ENCODE measurements at regions of chr4 and their contacts with region 1.

Region 1: DNA sequence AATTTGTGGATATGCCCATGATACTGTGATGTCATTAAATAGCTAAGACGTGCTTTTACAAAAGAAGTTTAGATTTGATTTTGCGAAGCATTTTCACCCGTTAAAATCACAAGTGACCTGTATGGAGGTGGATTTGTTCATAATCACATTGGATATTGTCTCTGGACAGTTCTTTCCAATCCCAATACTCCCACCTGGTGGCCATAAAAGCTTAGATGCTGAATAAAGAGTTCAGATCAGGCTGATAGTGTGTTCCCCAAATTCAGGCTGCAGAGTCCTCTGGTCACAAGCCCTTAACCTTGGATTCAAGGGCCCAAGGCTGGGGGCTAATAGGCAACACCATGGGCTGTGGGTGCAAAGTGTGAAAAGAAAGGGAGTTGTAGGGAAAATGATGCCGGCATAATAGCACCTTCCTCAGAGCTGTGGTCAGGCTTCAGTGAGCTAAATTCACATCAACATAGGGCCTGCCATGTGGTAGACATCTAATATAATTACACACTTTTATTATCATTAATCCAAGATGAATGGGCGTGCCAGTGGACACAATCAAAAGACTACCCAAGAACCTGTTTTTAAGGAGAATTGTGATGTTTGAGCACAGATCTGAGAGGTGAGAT is 28.1 kb downstream of the SMIM43 start:
- DNase-seq: no peak
- ATAC-seq: peak in 1 of 2 donors; percentile 58
- H3K4me3 ChIP-seq: no peak overlapping the region
- H3K27ac ChIP-seq: no peak overlapping the region
- H3K4me1 ChIP-seq: no peaks in the 10 kb centered on the region
- H3K27me3 ChIP-seq: no peaks in the 10 kb centered on the region
- CTCF ChIP-seq: peak in 4 of 5 experiments; percentile 28 to 46 (median 39)
- POLR2A ChIP-seq: no peak

Region 2: GRCh38 chr4:121370729-121371325 is 366.0 kb before region 1 on chr4:
- in situ Hi-C with region 1: loop called (anchors 5 to 25 kb)
- intact Hi-C with region 1: loop called (anchors 10 kb)
- DNase-seq: no peak
- ATAC-seq: no peak
- H3K4me3 ChIP-seq: no peak overlapping the region
- H3K27ac ChIP-seq: no peak overlapping the region
- H3K4me1 ChIP-seq: no peaks in the 10 kb centered on the region
- H3K27me3 ChIP-seq: no peaks in the 10 kb centered on the region
- CTCF ChIP-seq: peak in 3 of 5 experiments; percentile 15 to 56 (median 40)
- POLR2A ChIP-seq: no peak

Region 3: GRCh38 chr4:121462660-121463261 is 274.1 kb before region 1 on chr4:
- in situ Hi-C with region 1: no loop called
- intact Hi-C with region 1: loop called (anchors 10 kb)
- DNase-seq: no peak
- ATAC-seq: peak in 1 of 2 donors; percentile 39
- H3K4me3 ChIP-seq: no peak overlapping the region
- H3K27ac ChIP-seq: no peak overlapping the region
- H3K4me1 ChIP-seq: no peaks in the 10 kb centered on the region
- H3K27me3 ChIP-seq: no peaks in the 10 kb centered on the region
- CTCF ChIP-seq: peak in 2 of 5 experiments; percentile 39
- POLR2A ChIP-seq: no peak

Region 4: GRCh38 chr4:121869841-121870656 is 133.2 kb after region 1 on chr4 and contains the start of gene BBS7:
- in situ Hi-C with region 1: no loop called
- intact Hi-C with region 1: no loop called
- DNase-seq: peak; percentile 91 to 93
- ATAC-seq: peak; percentile 98
- H3K4me3 ChIP-seq: peak within 1 kb of the TSS; percentile 78 to 98 (median 96)
- H3K27ac ChIP-seq: peak within 1 kb of the TSS; percentile 83 to 90 (median 90)
- H3K4me1 ChIP-seq: peaks cover 0 to 4% of the 10 kb centered on the region in 2 donors
- H3K27me3 ChIP-seq: no peaks in the 10 kb centered on the region
- CTCF ChIP-seq: no peak
- POLR2A ChIP-seq: peak in 1 of 2 donors; percentile 64
- total RNA-seq, gene BBS7: 4.5 to 11.1 (median 6.7) TPM